B cell (primary cell): ENCODE measurements at regions of chr11 and their contacts with region 1.

Region 1: GRCh38 chr11:65251476-65251875 is 10.3 kb upstream of the POLA2 start:
- DNase-seq: no peak
- ATAC-seq: no peak
- H3K4me3 ChIP-seq: no peak overlapping the region
- H3K4me3 Mint-ChIP-seq: no peak overlapping the region
- H3K27ac ChIP-seq: no peak overlapping the region
- H3K27ac Mint-ChIP-seq: no peak overlapping the region
- H3K4me1 ChIP-seq: no peaks in the 10 kb centered on the region
- H3K4me1 Mint-ChIP-seq: no peaks in the 10 kb centered on the region
- H3K27me3 ChIP-seq: no peaks in the 10 kb centered on the region
- H3K27me3 Mint-ChIP-seq: no peaks in the 10 kb centered on the region
- CTCF ChIP-seq: no peak

Region 2: GRCh38 chr11:65225279-65226102 is 26.0 kb before region 1 on chr11:
- CTCF ChIA-PET with region 1: interaction called, 11 read pairs
- POLR2A ChIA-PET with region 1: no interaction called
- intact Hi-C with region 1: no loop called
- DNase-seq: peak; percentile 73
- ATAC-seq: peak; percentile 81
- H3K4me3 ChIP-seq: peak overlapping the region; percentile 33 to 62 (median 45)
- H3K4me3 Mint-ChIP-seq: peak overlapping the region; percentile 91
- H3K27ac ChIP-seq: no peak overlapping the region
- H3K27ac Mint-ChIP-seq: no peak overlapping the region
- H3K4me1 ChIP-seq: peaks cover 14 to 17% of the 10 kb centered on the region in 2 donors
- H3K4me1 Mint-ChIP-seq: peaks cover 12% of the 10 kb centered on the region
- H3K27me3 ChIP-seq: no peaks in the 10 kb centered on the region
- H3K27me3 Mint-ChIP-seq: no peaks in the 10 kb centered on the region
- CTCF ChIP-seq: peak; percentile 69